Activated T-helper 1 cell treated with anti-CD3 and anti-CD28 coated beads, Interleukin-12 subunit alpha, Interleukin-12 subunit beta, Interleukin-2, Interleukin-4 antibody, amounts not matched to agents 30 ng/mL and 10 ng/mL and 1 ng/mL, durations not matched to agents 14 hours and 24 hours and 36 hours (primary cell): ENCODE measurements at regions of chr1 and their contacts with region 1.

Region 1: GRCh38 chr1:89670163-89670562 is 37.2 kb downstream of the LRRC8C start:
- DNase-seq: no peak
- H3K4me3 Mint-ChIP-seq: peak overlapping the region; percentile 32
- H3K27ac Mint-ChIP-seq: peak overlapping the region; percentile 79
- H3K4me1 Mint-ChIP-seq: peaks cover 86% of the 10 kb centered on the region
- H3K27me3 Mint-ChIP-seq: no peaks in the 10 kb centered on the region

Region 2: GRCh38 chr1:89687254-89687653 is 17.1 kb after region 1 on chr1:
- intact Hi-C with region 1: loop called (anchors 2 kb)
- DNase-seq: no peak
- H3K4me3 Mint-ChIP-seq: no peak overlapping the region
- H3K27ac Mint-ChIP-seq: peak overlapping the region; percentile 32
- H3K4me1 Mint-ChIP-seq: peaks cover 64% of the 10 kb centered on the region
- H3K27me3 Mint-ChIP-seq: no peaks in the 10 kb centered on the region

Region 3: DNA sequence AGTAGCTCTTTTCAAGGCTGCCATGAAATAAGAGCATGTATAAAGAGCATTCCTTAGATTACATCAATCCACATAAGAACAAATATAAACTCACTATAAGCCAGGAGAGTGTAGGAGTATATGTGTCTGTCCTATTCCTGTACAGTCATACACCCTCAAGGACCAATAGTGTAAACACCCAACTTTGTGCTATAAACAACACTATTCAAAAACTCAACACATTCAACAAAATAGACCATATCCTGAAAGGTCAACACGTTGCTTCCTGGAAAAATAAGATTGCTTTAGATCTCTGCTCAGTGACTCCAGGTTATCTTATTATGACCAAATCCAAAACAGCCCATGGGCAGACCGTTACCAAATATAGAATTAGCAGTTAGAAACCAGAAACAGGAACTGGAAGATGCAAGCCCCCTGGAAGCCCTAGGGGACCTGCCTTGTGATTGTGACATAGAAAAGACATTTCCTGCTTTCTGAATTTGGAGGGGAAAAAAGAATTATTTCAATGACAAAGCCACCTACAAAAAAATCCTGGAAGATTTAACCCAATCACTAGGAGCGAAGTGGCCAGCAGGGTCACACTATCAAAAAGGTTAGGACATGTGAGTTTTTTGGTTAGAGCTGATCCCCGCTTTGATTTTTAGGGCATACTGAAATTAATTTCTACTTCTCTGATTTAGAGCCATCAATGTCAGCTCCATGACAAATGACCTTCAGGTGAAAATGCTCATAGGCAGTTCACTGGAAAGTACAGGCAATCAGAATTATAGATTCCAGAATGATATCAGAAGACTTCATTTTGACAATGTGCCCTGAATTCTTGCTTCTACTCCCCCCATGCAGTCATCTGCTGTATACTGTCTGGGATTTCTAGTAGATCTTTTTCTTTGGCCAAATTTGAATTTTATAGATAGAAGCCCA is 22.7 kb after region 1 on chr1:
- intact Hi-C with region 1: loop called (anchors 2 kb)
- DNase-seq: no peak
- H3K4me3 Mint-ChIP-seq: no peak overlapping the region
- H3K27ac Mint-ChIP-seq: peak overlapping the region; percentile 70
- H3K4me1 Mint-ChIP-seq: peaks cover 80% of the 10 kb centered on the region
- H3K27me3 Mint-ChIP-seq: no peaks in the 10 kb centered on the region

Region 4: DNA sequence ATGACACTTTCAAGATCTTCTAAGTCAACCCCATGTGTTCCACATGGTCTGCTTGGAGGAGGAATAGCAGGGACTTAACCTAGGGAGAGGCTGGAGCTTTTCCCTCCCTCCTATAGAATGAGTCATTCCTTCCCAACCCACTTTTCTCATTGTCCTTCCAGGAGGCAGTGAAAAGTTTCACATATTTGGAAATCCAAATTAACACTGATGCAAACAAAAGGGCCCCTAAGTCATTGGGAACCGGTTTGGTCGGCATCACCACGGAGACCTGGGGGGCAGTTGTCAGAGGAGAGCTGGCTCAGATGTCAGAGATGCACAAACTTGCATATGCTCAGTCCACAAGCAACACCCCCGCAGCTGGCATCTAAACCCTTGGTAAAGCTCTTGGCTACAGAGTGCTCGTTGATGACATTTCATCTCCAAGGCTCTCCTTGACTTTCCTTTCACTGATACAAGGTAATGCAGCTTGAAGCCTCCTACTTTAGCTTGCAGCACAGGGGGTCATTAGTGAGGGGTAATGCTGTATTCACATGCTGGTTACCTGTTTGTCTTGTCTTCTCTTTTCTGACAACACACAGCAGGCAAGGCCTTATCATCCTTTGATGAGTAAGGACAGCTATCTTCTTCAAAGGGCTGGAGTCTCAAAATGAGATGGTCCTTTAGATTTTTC is 138.4 kb after region 1 on chr1:
- intact Hi-C with region 1: no loop called
- DNase-seq: no peak
- H3K4me3 Mint-ChIP-seq: no peak overlapping the region
- H3K27ac Mint-ChIP-seq: no peak overlapping the region
- H3K4me1 Mint-ChIP-seq: no peaks in the 10 kb centered on the region
- H3K27me3 Mint-ChIP-seq: peaks cover 4% of the 10 kb centered on the region